H1 (cell line): ENCODE measurements at regions of chr2 and their contacts with region 1.

Region 1: GRCh38 chr2:72862239-72862988 is 24.8 kb upstream of the SPR start:
- DNase-seq: peak; percentile 91 to 98
- H3K4me3 ChIP-seq: peak overlapping the region; percentile 21 to 62 (median 54); a peak in 7 of 8 replicates
- H3K27ac ChIP-seq: no peak overlapping the region
- H3K4me1 ChIP-seq: peaks cover 0 to 3% (median 0%) of the 10 kb centered on the region in 4 experiments; a peak in 1 of 7 replicates
- H3K27me3 ChIP-seq: peaks cover 0 to 3% (median 0%) of the 10 kb centered on the region in 4 experiments; a peak in 2 of 7 replicates
- CTCF ChIP-seq: peak; percentile 98 to 100 (median 100)
- EP300 ChIP-seq: no peak; a peak in 1 of 3 replicates
- POLR2A ChIP-seq: peak in 1 of 2 experiments; percentile 62; a peak in 1 of 3 replicates
- RAD21 ChIP-seq: peak; percentile 84 to 88

Region 2: GRCh38 chr2:72770879-72771461 is 91.4 kb before region 1 on chr2:
- CTCF ChIA-PET with region 1: interaction called, 24 read pairs
- POLR2A ChIA-PET with region 1: interaction called, 3 read pairs
- DNase-seq: no peak
- H3K4me3 ChIP-seq: no peak overlapping the region
- H3K27ac ChIP-seq: no peak overlapping the region
- H3K4me1 ChIP-seq: peaks cover 0 to 3% (median 0%) of the 10 kb centered on the region in 4 experiments; a peak in 1 of 7 replicates
- H3K27me3 ChIP-seq: no peaks in the 10 kb centered on the region
- CTCF ChIP-seq: peak in 2 of 3 experiments; percentile 65 to 68; a peak in 2 of 4 replicates
- EP300 ChIP-seq: no peak
- POLR2A ChIP-seq: no peak
- RAD21 ChIP-seq: peak; percentile 86 to 87

Region 3: DNA sequence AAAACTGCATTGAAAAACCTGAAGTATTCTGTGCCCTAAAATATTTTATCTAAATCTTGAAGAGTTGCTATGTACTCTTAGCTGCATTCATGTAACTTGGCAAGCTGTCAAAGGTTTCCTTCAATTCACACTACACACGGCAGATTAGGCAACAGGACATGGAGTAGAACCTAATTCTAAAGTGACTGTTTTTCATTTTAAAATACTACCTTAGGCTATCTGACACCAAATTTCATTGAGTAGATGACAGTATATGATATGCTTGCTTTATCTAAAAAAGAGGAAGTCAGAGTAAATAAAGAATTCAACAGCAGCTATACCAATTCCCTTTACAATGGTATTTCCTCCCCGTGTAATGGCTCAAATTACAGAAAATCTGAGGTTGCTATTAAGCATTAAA is 81.9 kb before region 1 on chr2:
- CTCF ChIA-PET with region 1: interaction called, 19 read pairs
- POLR2A ChIA-PET with region 1: no interaction called
- DNase-seq: no peak
- H3K4me3 ChIP-seq: no peak overlapping the region
- H3K27ac ChIP-seq: no peak overlapping the region
- H3K4me1 ChIP-seq: peaks cover 0 to 3% (median 0%) of the 10 kb centered on the region in 4 experiments; a peak in 1 of 7 replicates
- H3K27me3 ChIP-seq: no peaks in the 10 kb centered on the region
- CTCF ChIP-seq: no peak
- EP300 ChIP-seq: no peak
- POLR2A ChIP-seq: no peak
- RAD21 ChIP-seq: no peak

Region 4: GRCh38 chr2:72813841-72814240 is 48.6 kb before region 1 on chr2:
- CTCF ChIA-PET with region 1: interaction called, 19 read pairs
- POLR2A ChIA-PET with region 1: interaction called, 3 read pairs
- DNase-seq: no peak
- H3K4me3 ChIP-seq: no peak overlapping the region
- H3K27ac ChIP-seq: no peak overlapping the region
- H3K4me1 ChIP-seq: no peaks in the 10 kb centered on the region
- H3K27me3 ChIP-seq: no peaks in the 10 kb centered on the region
- CTCF ChIP-seq: no peak
- EP300 ChIP-seq: no peak
- POLR2A ChIP-seq: no peak
- RAD21 ChIP-seq: no peak

Region 5: DNA sequence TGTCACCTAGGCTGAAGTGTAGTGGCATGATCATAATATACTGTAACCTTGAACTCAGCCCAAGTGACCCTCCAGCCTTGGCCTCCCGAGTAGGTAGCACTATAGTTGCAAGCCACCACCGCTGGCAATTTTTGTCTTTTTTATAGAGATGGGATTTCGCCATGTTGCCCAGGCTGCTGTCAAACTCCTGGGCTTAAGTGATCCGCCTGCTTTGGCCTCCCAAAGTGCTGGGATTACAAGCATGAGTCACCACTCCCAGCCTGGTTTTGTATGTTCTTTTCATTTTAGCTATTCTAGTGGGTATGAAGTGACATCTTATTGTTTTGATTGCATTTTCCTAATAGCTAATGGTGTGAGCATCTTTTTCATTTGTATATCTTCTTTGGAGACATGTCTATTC is 25.2 kb before region 1 on chr2:
- CTCF ChIA-PET with region 1: interaction called, 22 read pairs
- POLR2A ChIA-PET with region 1: no interaction called
- DNase-seq: no peak
- H3K4me3 ChIP-seq: no peak overlapping the region
- H3K27ac ChIP-seq: no peak overlapping the region
- H3K4me1 ChIP-seq: no peaks in the 10 kb centered on the region
- H3K27me3 ChIP-seq: no peaks in the 10 kb centered on the region
- CTCF ChIP-seq: no peak
- EP300 ChIP-seq: no peak
- POLR2A ChIP-seq: no peak
- RAD21 ChIP-seq: no peak

Region 6: DNA sequence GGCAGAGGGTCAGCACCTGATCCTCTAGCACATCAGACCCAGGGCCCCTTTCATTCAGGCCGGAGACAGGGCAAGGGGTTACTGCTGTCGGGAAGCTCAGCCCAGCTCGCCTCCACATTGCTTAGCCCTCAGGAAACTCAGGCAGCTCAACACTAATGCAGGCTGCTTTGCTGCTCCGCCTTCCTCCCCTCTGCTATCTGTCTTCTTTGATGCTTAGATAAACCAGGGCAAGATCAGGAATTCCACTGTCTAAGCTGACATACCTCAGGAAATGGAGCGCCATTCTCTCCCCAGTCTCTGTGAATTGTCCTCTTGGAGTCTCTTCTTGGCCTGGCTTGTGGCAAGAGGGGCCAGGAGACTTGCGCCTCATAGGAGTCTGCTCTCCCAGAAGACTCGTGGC is 11.1 kb before region 1 on chr2:
- CTCF ChIA-PET with region 1: interaction called, 20 read pairs
- POLR2A ChIA-PET with region 1: no interaction called
- DNase-seq: no peak
- H3K4me3 ChIP-seq: no peak overlapping the region
- H3K27ac ChIP-seq: no peak overlapping the region
- H3K4me1 ChIP-seq: peaks cover 0 to 4% (median 0%) of the 10 kb centered on the region in 4 experiments; a peak in 2 of 7 replicates
- H3K27me3 ChIP-seq: no peaks in the 10 kb centered on the region; a peak in 1 of 7 replicates
- CTCF ChIP-seq: no peak
- EP300 ChIP-seq: no peak
- POLR2A ChIP-seq: no peak
- RAD21 ChIP-seq: no peak